ENCODE measurements at regions of chr2 and their contacts with region 1.

Region 1: DNA sequence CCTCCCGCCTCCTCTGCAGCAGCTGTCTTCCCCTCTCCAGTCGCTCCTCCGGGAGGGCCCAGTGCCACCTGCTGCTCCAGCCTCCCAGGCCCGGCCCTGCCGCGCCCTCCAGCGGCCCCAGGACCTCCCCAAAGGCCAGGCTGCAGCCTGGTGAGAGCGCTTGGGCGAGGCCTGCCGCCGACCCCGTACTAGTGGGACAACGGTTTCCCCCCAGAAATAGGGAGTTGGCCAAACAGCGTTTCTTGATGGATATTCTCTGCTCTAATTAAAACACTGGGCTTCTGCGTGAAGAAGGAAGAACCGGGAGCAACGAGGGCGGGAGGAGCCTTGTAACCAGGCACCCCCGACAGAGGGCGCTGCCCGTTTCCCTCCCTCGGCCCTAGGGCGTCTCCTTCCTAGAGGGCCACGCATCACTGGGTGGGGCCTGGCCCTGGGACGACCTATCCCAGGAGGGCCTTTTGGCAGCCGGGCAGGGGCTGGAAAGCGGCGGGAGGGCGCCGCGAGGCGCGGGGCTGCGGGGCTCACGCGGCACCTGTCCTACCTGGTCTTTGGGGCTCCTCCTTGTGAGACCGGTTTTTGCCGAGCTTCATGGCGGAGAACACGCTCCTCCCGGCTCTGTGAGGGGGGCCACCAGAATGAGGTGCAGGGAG is 25.4 kb upstream of the OTOF start:
- DNase-seq: peak; percentile 47 to 90 (median 74)
- ATAC-seq: peak; percentile 99
- H3K4me3 ChIP-seq: peak overlapping the region; percentile 70
- H3K4me3 Mint-ChIP-seq: peak overlapping the region; percentile 63 to 85 (median 78)
- H3K27ac ChIP-seq: no peak overlapping the region
- H3K27ac Mint-ChIP-seq: peak overlapping the region in 4 of 9 donors; percentile 18 to 70 (median 25)
- H3K4me1 ChIP-seq: peaks cover 0 to 6% of the 10 kb centered on the region in 2 donors
- H3K4me1 Mint-ChIP-seq: peaks cover 1 to 9% (median 7%) of the 10 kb centered on the region in 7 donors
- H3K27me3 ChIP-seq: no peaks in the 10 kb centered on the region
- H3K27me3 Mint-ChIP-seq: peaks cover 0 to 5% (median 0%) of the 10 kb centered on the region in 5 donors

Region 2: GRCh38 chr2:26577434-26578112 is 74.2 kb after region 1 on chr2:
- CTCF ChIA-PET with region 1: interaction called, 11 read pairs
- POLR2A ChIA-PET with region 1: no interaction called
- intact Hi-C with region 1: loop called in 1 of 2 experiments (anchors 1 kb)
- DNase-seq: peak; percentile 17 to 66 (median 52)
- ATAC-seq: peak; percentile 88
- H3K4me3 ChIP-seq: no peak overlapping the region
- H3K4me3 Mint-ChIP-seq: no peak overlapping the region
- H3K27ac ChIP-seq: no peak overlapping the region
- H3K27ac Mint-ChIP-seq: no peak overlapping the region
- H3K4me1 ChIP-seq: no peaks in the 10 kb centered on the region
- H3K4me1 Mint-ChIP-seq: peaks cover 0 to 5% (median 0%) of the 10 kb centered on the region in 7 donors
- H3K27me3 ChIP-seq: peaks cover 0 to 5% of the 10 kb centered on the region in 2 donors
- H3K27me3 Mint-ChIP-seq: peaks cover 5 to 13% (median 10%) of the 10 kb centered on the region in 5 donors

Region 3: GRCh38 chr2:26745609-26746327 is 242.4 kb after region 1 on chr2:
- CTCF ChIA-PET with region 1: no interaction called
- POLR2A ChIA-PET with region 1: no interaction called
- intact Hi-C with region 1: loop called in 1 of 2 experiments (anchors 1 kb)
- DNase-seq: peak; percentile 42 to 75 (median 64)
- ATAC-seq: peak; percentile 84
- H3K4me3 ChIP-seq: no peak overlapping the region
- H3K4me3 Mint-ChIP-seq: no peak overlapping the region
- H3K27ac ChIP-seq: no peak overlapping the region
- H3K27ac Mint-ChIP-seq: no peak overlapping the region
- H3K4me1 ChIP-seq: no peaks in the 10 kb centered on the region
- H3K4me1 Mint-ChIP-seq: peaks cover 0 to 9% (median 4%) of the 10 kb centered on the region in 7 donors
- H3K27me3 ChIP-seq: no peaks in the 10 kb centered on the region
- H3K27me3 Mint-ChIP-seq: peaks cover 0 to under 1% (median 0%) of the 10 kb centered on the region in 5 donors